ENCODE measurements at regions of chr11 and their contacts with region 1.

Region 1: DNA sequence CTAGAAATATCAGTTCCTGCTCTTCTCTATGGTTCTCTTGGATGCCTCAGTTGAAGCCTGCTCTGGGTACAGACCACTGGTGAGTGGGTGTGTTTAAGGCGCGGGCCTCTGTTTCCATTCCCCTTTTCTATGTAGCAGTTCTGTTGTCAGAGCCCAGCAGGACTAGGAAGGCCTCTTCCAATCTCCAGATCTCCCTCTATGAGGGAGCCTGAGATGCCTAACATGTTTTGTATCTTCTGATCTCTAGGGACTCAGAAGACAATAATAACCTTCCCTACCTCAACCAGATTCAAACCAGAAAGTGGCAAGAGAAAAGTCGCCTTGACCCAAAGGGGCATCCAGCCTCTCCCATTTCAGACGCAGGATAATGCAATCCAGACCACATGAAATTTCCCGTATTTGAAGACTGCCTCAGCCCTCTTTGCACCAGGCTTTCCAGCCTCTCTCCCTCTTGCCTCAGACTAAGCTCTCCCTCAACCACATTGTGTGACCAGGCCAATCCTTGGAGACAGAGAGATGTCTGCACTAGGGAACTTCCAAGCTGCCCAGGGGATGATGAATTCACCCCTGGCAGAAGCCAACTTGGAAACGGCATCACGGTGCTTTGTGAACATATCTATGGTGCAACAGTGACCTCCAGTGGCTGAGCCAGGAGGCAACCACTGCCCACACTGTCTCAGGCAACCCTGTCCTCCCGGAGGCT is 150.1 kb upstream of the UBASH3B start:
- DNase-seq: peak; percentile 95
- ATAC-seq: peak; percentile 99
- H3K4me3 ChIP-seq: no peak overlapping the region
- H3K27ac ChIP-seq: peak overlapping the region; percentile 47
- H3K4me1 ChIP-seq: peaks cover 5% of the 10 kb centered on the region; the same call in 1 of the 2 replicates
- H3K27me3 ChIP-seq: no peaks in the 10 kb centered on the region
- CTCF ChIP-seq: peak; percentile 96
- POLR2A ChIP-seq: peak; percentile 41; the same call in 1 of the 2 replicates
- RAD21 ChIP-seq: peak; percentile 96

Region 2: GRCh38 chr11:120929664-120930154 is 1575.7 kb before region 1 on chr11:
- CTCF ChIA-PET with region 1: no interaction called
- POLR2A ChIA-PET with region 1: no interaction called
- dilution Hi-C with region 1: no loop called
- in situ Hi-C with region 1: no loop called
- intact Hi-C with region 1: loop called (anchors 5 kb)
- DNase-seq: peak; percentile 26
- ATAC-seq: peak; percentile 65; the same call in 1 of the 2 replicates
- H3K4me3 ChIP-seq: no peak overlapping the region
- H3K27ac ChIP-seq: no peak overlapping the region
- H3K4me1 ChIP-seq: no peaks in the 10 kb centered on the region
- H3K27me3 ChIP-seq: peaks cover 4% of the 10 kb centered on the region; the same call in 1 of the 2 replicates
- CTCF ChIP-seq: peak; percentile 47
- POLR2A ChIP-seq: no peak
- RAD21 ChIP-seq: peak; percentile 48

Region 3: GRCh38 chr11:121318848-121319834 is 1186.3 kb before region 1 on chr11:
- CTCF ChIA-PET with region 1: no interaction called
- POLR2A ChIA-PET with region 1: no interaction called
- dilution Hi-C with region 1: no loop called
- in situ Hi-C with region 1: loop called (anchors 25 kb)
- intact Hi-C with region 1: no loop called
- DNase-seq: peak; percentile 56
- ATAC-seq: peak; percentile 89
- H3K4me3 ChIP-seq: no peak overlapping the region
- H3K27ac ChIP-seq: no peak overlapping the region
- H3K4me1 ChIP-seq: no peaks in the 10 kb centered on the region
- H3K27me3 ChIP-seq: peaks cover 12% of the 10 kb centered on the region
- CTCF ChIP-seq: peak; percentile 73
- POLR2A ChIP-seq: no peak
- RAD21 ChIP-seq: peak; percentile 65

Region 4: GRCh38 chr11:122045181-122045586 is 460.3 kb before region 1 on chr11:
- CTCF ChIA-PET with region 1: interaction called, 3 read pairs
- POLR2A ChIA-PET with region 1: no interaction called
- dilution Hi-C with region 1: no loop called
- in situ Hi-C with region 1: no loop called
- intact Hi-C with region 1: loop called (anchors 10 kb)
- DNase-seq: peak; percentile 92
- ATAC-seq: peak; percentile 56
- H3K4me3 ChIP-seq: no peak overlapping the region
- H3K27ac ChIP-seq: peak overlapping the region; percentile 48; the same call in 1 of the 2 replicates
- H3K4me1 ChIP-seq: peaks cover 21% of the 10 kb centered on the region
- H3K27me3 ChIP-seq: no peaks in the 10 kb centered on the region
- CTCF ChIP-seq: no peak
- POLR2A ChIP-seq: no peak
- RAD21 ChIP-seq: no peak; the same call in 1 of the 2 replicates

Region 5: DNA sequence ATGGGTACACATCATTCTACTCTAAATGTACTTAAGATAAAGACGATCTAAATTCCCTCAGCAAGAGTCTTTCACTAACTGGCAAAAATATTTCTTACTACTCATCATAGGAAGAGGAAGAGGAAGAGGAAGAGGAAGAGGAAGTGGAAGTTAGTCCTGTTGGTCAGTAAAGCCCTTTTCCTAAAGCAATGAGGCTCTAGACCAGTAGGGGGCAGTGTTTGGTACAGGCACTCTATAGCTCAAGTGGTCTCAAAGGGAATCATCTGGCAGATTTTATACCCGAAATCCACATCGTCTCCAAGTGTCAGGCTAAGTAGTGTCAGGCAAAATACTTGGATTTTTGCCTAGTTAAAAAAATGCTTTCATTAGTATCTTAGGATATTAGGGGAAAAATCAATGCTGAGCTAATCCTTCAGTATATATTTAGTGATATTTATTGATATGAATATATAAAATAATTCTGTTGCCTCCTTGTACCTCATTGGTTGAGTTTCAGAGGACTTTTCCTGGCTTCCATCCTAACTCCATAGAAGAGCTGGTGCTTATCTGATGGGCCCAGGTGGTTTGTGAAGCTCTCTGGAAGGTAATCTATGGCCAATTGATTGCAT is 397.2 kb before region 1 on chr11:
- CTCF ChIA-PET with region 1: no interaction called
- POLR2A ChIA-PET with region 1: no interaction called
- dilution Hi-C with region 1: no loop called
- in situ Hi-C with region 1: loop called (anchors 10 kb)
- intact Hi-C with region 1: no loop called
- DNase-seq: peak; percentile 70
- ATAC-seq: no peak
- H3K4me3 ChIP-seq: no peak overlapping the region
- H3K27ac ChIP-seq: no peak overlapping the region
- H3K4me1 ChIP-seq: peaks cover 25% of the 10 kb centered on the region
- H3K27me3 ChIP-seq: no peaks in the 10 kb centered on the region
- CTCF ChIP-seq: peak; percentile 62
- POLR2A ChIP-seq: no peak
- RAD21 ChIP-seq: peak; percentile 39

Region 6: DNA sequence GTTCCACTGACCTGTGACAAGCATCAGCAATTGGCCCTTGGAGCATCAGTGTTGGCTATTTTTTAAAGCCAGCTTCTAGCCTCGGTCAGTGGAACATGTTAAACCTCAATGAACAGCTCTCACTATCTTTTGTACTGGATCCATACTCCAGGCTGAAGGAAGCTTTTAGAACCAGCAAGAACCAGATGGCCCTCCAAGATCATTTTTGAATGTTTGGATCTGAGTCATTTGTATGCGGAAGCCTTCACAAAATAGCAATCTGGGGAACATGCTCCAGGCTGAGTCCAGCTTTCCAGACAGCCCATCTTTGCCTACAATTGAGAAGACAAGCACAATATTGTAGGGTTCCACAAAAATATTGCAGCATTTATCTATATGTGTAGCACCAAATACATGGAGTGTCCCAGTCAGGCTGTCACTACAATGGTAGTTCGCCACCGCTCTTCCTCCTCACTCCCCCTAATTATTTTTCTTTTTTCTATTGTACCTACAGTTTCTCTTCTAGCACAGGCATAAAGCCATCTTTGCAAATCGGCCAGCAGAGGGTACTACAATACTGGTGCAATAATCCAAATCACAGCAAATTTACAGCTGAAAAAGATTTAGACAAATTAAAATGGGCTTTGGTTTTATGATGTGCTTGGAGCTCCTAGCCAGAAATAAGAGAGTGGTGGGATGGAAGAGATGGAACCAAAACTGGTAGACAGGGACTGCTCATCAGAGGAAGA is 212.0 kb before region 1 on chr11:
- CTCF ChIA-PET with region 1: interaction called, 4 read pairs
- POLR2A ChIA-PET with region 1: no interaction called
- dilution Hi-C with region 1: no loop called
- in situ Hi-C with region 1: no loop called
- intact Hi-C with region 1: loop called (anchors 1 kb)
- DNase-seq: peak; percentile 37
- ATAC-seq: peak; percentile 24; the same call in 1 of the 2 replicates
- H3K4me3 ChIP-seq: no peak overlapping the region
- H3K27ac ChIP-seq: no peak overlapping the region
- H3K4me1 ChIP-seq: no peaks in the 10 kb centered on the region
- H3K27me3 ChIP-seq: no peaks in the 10 kb centered on the region
- CTCF ChIP-seq: peak; percentile 46
- POLR2A ChIP-seq: no peak
- RAD21 ChIP-seq: peak; percentile 42

Measured in IMR-90 (cell line).